Heart left ventricle (tissue), 16 donors: ENCODE measurements at regions of chr14 and their contacts with region 1.

Region 1: GRCh38 chr14:27553790-27554189 is 956.0 kb upstream of the NOVA1 start:
- DNase-seq: no peak
- ATAC-seq: no peak
- H3K4me3 ChIP-seq: no peak overlapping the region
- H3K27ac ChIP-seq: no peak overlapping the region
- H3K4me1 ChIP-seq: no peaks in the 10 kb centered on the region
- H3K27me3 ChIP-seq: no peaks in the 10 kb centered on the region
- CTCF ChIP-seq: peak in 2 of 12 donors; percentile 6 to 7
- POLR2A ChIP-seq: no peak

Region 2: GRCh38 chr14:28243600-28243999 is 689.8 kb after region 1 on chr14:
- intact Hi-C with region 1: loop called in 1 of 10 experiments (anchors 10 kb)
- DNase-seq: no peak
- ATAC-seq: no peak
- H3K4me3 ChIP-seq: no peak overlapping the region
- H3K27ac ChIP-seq: no peak overlapping the region
- H3K4me1 ChIP-seq: no peaks in the 10 kb centered on the region
- H3K27me3 ChIP-seq: no peaks in the 10 kb centered on the region
- CTCF ChIP-seq: no peak
- POLR2A ChIP-seq: no peak